Endothelial cell of umbilical vein (primary cell): ENCODE measurements at regions of chr12 and their contacts with region 1.

Region 1: DNA sequence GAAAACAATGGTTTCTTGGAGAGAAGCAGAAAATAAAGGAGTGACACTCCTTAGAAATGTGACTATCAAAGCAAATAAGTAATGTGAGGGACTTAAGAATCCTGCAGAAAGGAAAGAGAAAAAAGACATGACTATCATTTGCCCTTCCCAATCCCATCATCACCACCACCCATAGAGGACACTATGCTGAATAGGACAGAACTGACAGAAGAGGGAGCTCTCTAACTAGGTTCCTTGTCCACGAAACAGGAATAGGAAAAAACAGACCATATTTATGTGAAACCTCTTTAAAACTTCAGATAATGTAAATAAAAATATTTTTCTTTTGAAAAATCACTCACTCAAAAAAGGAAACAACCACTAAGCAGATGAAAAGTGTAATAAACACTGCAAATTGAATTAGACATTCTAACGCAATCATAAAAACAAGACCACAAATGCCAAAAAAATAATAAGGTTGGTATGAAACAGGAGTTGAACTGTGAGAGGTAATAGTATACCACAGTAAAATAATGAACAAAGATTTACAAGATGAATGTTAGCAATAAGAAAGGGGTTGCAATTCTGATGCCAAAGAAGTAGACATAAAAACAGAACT is 24.1 kb downstream of the KLRD1 start:
- DNase-seq: peak; percentile 62
- H3K4me3 ChIP-seq: no peak overlapping the region
- H3K27ac ChIP-seq: no peak overlapping the region
- H3K4me1 ChIP-seq: no peaks in the 10 kb centered on the region
- H3K27me3 ChIP-seq: no peaks in the 10 kb centered on the region
- CTCF ChIP-seq: peak; percentile 59 to 65
- POLR2A ChIP-seq: no peak

Region 2: DNA sequence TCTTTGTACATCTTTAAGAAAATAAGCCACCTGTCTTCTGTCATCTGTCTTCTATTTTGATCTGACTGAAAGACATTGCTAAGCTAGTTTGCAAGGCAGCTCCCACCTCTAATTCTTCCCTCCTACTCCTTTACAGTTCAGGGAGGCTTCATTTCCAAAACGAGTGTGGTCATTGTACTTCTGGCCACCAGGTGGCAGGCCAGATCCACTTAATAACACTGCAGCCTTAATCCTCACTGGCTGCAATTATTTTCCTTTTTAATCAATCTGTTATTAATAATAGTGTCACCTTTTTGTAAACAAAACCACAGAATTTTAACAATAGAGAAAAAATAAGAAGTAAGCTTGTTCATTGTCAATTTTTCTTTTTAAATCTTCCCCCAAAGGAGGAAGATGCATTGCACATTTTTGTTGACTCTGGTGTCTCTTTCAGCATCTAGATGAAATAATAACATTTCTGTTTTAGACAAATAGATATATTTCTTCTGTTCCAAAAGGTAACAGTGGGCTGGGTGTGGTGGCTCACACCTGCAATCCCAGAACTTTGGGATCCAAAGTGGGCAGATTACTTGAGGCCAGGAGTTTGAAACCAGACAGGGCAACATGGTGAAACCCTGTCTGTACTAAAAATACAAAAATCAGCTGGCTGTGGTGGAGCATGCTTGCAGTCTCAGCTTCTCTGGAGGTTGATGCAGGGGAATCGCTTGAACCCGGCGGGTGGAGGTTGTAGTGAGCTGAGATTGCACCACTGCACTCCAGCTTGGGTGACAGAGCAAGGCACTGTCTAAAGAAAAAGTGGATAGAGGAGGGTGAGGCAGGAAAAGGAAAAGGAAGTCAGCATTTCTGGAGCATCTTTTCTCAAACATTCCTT is 95.7 kb before region 1 on chr12:
- CTCF ChIA-PET with region 1: interaction called, 5 read pairs
- POLR2A ChIA-PET with region 1: no interaction called
- dilution Hi-C with region 1: no loop called
- intact Hi-C with region 1: loop called (anchors 1 kb)
- DNase-seq: peak; percentile 55
- H3K4me3 ChIP-seq: no peak overlapping the region
- H3K27ac ChIP-seq: no peak overlapping the region
- H3K4me1 ChIP-seq: no peaks in the 10 kb centered on the region
- H3K27me3 ChIP-seq: no peaks in the 10 kb centered on the region
- CTCF ChIP-seq: peak; percentile 72 to 73
- POLR2A ChIP-seq: no peak

Region 3: GRCh38 chr12:10501031-10501430 is 169.3 kb after region 1 on chr12:
- CTCF ChIA-PET with region 1: interaction called, 3 read pairs
- POLR2A ChIA-PET with region 1: no interaction called
- dilution Hi-C with region 1: no loop called
- intact Hi-C with region 1: loop called (anchors 1 kb)
- DNase-seq: peak; percentile 4
- H3K4me3 ChIP-seq: no peak overlapping the region
- H3K27ac ChIP-seq: no peak overlapping the region
- H3K4me1 ChIP-seq: no peaks in the 10 kb centered on the region
- H3K27me3 ChIP-seq: no peaks in the 10 kb centered on the region
- CTCF ChIP-seq: no peak
- POLR2A ChIP-seq: no peak

Region 4: GRCh38 chr12:10613349-10614055 is 281.8 kb after region 1 on chr12 and contains the start of gene MAGOHB:
- CTCF ChIA-PET with region 1: no interaction called
- POLR2A ChIA-PET with region 1: no interaction called
- dilution Hi-C with region 1: no loop called
- intact Hi-C with region 1: loop called (anchors 5 kb)
- DNase-seq: peak; percentile 95
- H3K4me3 ChIP-seq: peak within 1 kb of the TSS; percentile 58 to 96 (median 93)
- H3K27ac ChIP-seq: peak within 1 kb of the TSS; percentile 90
- H3K4me1 ChIP-seq: peaks cover 18% of the 10 kb centered on the region
- H3K27me3 ChIP-seq: no peaks in the 10 kb centered on the region
- CTCF ChIP-seq: no peak
- POLR2A ChIP-seq: peak; percentile 70
- total RNA-seq, gene MAGOHB: 45.4 and 48.3 TPM in 2 replicates